ENCODE measurements at regions of chr19 and their contacts with region 1.

Region 1: DNA sequence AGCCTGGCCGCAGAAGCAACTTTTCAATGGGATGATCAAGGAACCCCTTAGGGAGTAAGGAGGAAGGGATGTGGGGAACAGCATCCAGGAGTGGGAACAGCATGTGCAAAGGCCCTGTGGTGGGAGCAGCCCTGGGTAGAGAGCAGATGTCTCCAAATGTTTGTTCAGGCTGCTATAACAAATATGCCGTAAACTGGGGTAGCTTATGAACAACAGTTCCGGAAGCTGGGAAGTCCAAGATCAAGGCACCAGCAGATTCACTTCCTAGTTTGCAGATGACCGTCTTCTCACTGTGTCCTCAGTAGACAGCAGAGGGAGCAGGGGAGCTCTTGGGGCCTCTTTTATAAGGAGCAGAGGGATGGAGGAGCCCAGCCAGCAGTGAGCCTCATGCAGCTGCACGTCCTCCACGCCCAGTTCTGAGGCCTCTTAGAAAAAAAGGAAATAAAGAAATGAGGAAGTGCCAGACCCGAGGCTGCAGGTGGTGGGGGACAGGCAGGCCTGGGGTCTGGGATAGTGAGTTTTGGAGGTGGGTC is 4.2 kb upstream of the LRRC25 start:
- DNase-seq: peak; percentile 77
- H3K4me3 ChIP-seq: no peak overlapping the region
- H3K27ac ChIP-seq: no peak overlapping the region
- H3K4me1 ChIP-seq: peaks cover 6% of the 10 kb centered on the region
- H3K27me3 ChIP-seq: no peaks in the 10 kb centered on the region

Region 2: DNA sequence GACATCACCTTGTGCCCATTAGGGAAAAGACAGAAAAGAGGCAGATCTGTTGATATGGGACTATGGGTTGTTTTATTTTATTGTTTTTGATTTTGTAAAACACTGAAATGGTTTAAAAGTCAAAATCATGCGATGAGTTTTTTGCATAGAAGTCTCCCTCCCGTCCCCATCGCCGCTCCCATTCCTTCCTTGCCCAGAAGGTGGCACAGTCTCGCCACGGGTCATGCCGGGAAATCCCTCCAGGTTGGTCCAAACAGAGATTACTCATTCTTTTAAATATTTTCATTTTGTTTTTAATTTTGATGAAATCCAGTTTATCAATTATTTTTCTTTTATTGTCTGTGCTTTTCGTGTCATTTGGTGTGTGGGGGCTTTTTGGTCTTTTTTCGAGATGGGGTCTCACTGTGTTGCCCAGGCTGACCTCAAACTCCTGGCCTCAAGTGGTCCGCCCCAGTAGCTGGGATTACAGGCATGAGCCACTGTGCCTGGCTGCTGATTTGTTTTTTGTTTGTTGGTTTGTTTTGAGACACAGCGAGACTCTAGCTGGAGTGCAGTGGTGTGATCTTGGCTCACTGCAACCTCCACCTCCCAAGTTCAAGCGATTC is 52.0 kb before region 1 on chr19:
- in situ Hi-C with region 1: loop called (anchors 5 kb)
- DNase-seq: peak; percentile 82
- H3K4me3 ChIP-seq: no peak overlapping the region
- H3K27ac ChIP-seq: no peak overlapping the region
- H3K4me1 ChIP-seq: peaks cover 3% of the 10 kb centered on the region; the same call in 1 of the 2 replicates
- H3K27me3 ChIP-seq: no peaks in the 10 kb centered on the region

Region 3: GRCh38 chr19:18503971-18504885 is 102.6 kb after region 1 on chr19:
- in situ Hi-C with region 1: no loop called
- DNase-seq: no peak
- H3K4me3 ChIP-seq: no peak overlapping the region
- H3K27ac ChIP-seq: no peak overlapping the region
- H3K4me1 ChIP-seq: peaks cover 28% of the 10 kb centered on the region
- H3K27me3 ChIP-seq: no peaks in the 10 kb centered on the region

Measured in GM23248 (cell line).